Activated T-helper 2 cell treated with anti-CD3 and anti-CD28 coated beads, Interferon-gamma antibody, Interleukin-2, Interleukin-4, amounts not matched to agents 10 μg/mL and 5 μg/mL and 100 μg/mL, durations not matched to agents 14 hours and 24 hours and 36 hours (primary cell): ENCODE measurements at regions of chr5 and their contacts with region 1.

Region 1: GRCh38 chr5:159240301-159240870 is 22.7 kb upstream of the UBLCP1 start:
- DNase-seq: no peak
- H3K4me3 Mint-ChIP-seq: no peak overlapping the region
- H3K27ac Mint-ChIP-seq: peak overlapping the region; percentile 6
- H3K4me1 Mint-ChIP-seq: peaks cover 25% of the 10 kb centered on the region
- H3K27me3 Mint-ChIP-seq: no peaks in the 10 kb centered on the region

Region 2: DNA sequence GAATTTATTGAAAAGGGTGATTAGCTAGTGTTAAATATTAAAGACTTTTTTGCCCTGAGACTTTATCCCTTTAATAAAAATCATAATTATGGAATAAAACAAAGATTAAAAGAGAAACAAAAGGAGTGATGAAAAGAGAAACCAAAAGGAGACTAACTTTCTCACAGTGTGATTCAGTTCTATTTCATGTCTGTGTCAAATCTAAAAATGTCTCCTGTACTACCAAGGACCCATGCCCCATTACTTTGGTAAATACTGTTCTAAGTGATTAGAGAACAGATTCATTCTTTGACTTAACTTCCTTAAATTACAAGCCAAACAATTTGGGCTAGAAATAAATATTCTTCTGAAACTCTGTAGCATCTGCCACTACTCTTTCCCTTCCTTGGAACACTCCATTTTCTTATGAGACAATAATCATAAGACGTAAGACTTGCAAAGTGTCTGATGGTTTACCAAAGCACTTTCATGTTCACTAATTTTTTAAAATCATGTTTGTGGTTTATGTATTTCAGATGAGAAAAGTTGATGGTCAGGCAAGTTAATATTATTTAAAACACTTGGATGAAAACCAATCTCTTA is 459.6 kb before region 1 on chr5:
- intact Hi-C with region 1: no loop called
- DNase-seq: no peak
- H3K4me3 Mint-ChIP-seq: no peak overlapping the region
- H3K27ac Mint-ChIP-seq: no peak overlapping the region
- H3K4me1 Mint-ChIP-seq: no peaks in the 10 kb centered on the region
- H3K27me3 Mint-ChIP-seq: peaks cover 6% of the 10 kb centered on the region

Region 3: GRCh38 chr5:159178978-159179377 is 61.4 kb before region 1 on chr5:
- intact Hi-C with region 1: loop called (anchors 1 kb)
- DNase-seq: no peak
- H3K4me3 Mint-ChIP-seq: peak overlapping the region; percentile 30
- H3K27ac Mint-ChIP-seq: peak overlapping the region; percentile 85
- H3K4me1 Mint-ChIP-seq: peaks cover 74% of the 10 kb centered on the region
- H3K27me3 Mint-ChIP-seq: no peaks in the 10 kb centered on the region

Region 4: DNA sequence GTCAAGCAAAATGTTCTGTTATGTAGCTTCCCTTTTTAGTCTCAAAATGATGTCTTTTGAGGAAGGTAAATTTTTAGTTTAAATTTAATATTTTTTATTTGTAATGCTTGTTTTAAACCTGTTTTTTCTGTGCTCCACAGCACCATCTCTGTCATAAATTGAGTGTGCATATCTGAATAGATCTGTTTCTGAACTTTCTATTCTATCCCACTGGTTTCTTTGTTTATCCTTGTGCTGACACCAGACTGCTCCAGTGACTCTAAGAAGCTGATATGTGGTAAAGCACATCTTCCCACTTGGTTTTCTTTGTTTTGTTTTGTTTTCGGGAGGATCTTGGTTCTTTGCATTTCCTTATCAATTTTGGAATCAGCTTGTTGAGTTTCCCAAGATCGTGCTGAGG is 23.9 kb before region 1 on chr5:
- intact Hi-C with region 1: loop called (anchors 1 kb)
- DNase-seq: no peak
- H3K4me3 Mint-ChIP-seq: no peak overlapping the region
- H3K27ac Mint-ChIP-seq: peak overlapping the region; percentile 57
- H3K4me1 Mint-ChIP-seq: peaks cover 24% of the 10 kb centered on the region
- H3K27me3 Mint-ChIP-seq: peaks cover 13% of the 10 kb centered on the region